ENCODE measurements at regions of chr1 and their contacts with region 1.

Region 1: GRCh38 chr1:52404116-52404986 is at the starts of genes ORC1 and PRPF38A:
- DNase-seq: peak; percentile 96 to 99 (median 98)

Region 2: DNA sequence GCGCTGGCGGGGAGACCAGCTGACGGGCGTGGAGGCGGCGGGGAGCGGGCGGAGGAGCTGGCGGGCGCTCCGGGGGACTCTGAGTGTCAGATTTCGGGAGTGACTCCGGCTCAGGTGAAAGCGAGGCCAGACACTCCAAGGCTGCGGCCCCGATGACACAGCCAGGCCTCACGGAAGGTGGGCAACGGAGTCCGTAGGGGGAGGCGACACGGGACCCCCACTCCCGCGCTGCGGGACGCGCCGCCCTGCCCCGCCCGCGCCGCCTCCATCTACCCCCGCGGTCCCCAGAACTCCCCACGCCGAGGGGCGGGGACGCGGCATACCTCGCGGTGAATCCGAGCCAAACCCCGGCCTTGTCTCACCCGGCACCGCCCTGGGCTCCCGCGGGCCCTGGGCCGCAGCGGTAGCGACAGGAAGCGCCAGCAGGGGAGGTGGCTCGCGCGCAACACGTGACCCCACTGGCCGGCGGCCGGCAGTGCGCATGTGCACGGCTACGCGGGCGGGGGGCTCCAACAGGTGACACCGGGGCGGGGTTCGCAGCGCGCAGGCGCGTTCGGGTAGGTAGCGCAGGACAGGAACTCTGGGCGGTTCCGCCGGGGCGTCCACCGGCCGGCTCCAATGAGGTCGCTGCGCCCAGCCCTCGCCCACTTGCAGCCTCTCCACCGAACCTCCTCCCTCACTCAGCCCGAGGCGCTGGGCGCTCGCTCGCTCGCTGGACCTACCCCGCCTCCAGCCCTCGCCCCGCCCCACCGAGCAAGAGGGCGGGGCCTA is 38.4 kb before region 1 on chr1 and contains the start of gene CC2D1B:
- intact Hi-C with region 1: loop called (anchors 5 kb)
- DNase-seq: peak; percentile 82 to 97 (median 93)

Region 3: GRCh38 chr1:52552505-52553361 is 148.4 kb after region 1 on chr1 and contains the start of gene TUT4:
- intact Hi-C with region 1: loop called (anchors 10 kb)
- DNase-seq: peak; percentile 53 to 91 (median 79)